ENCODE measurements at regions of chr3 and their contacts with region 1.

Region 1: DNA sequence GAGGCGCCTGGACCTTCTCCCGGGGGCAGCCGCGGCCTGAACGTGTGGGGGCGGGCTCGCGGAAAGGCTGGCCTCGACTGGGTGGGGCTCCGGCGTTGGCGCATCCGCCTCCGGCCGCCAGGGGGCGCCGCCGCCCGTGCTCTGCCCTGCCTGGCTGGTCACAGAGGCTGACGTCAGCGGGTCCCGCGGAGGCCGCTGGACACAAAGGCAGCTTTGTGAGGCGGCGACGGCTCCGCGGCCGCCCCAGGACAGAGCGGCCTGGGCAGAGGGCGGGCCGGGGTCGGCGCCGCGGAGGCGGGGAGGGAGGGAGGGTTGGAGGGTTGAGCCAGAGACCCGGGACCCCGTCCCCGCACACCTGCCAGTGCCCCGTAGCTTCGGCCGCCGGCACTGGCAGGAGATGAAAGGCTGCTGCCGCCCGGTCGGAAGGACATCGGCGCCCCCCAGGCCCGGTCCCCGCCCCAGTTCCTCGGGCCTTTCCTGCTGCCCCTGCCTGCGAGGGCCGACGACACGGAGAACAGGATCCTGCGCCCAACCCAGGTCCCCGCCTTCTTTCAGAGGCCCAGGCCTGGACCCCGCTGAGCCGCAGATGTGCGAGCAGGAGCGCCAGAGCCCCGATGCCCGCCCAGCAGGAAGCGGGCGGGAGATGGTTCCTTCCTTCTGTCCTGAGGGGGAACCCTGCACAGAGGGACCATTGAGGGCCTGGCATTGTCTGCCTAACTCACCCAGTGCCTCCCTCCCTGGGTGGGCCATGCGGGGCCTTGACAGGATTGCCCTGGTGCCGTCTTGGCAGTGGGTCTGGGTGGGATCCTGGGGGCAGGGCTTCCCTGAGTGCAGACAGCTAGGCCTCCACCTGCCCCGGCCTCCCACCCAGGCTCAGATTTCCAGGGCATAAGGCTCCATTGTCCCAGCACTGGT is 8.7 kb upstream of the SEMA3B start:
- DNase-seq: peak; percentile 89
- H3K4me3 ChIP-seq: peak overlapping the region; percentile 54 to 62
- H3K27ac ChIP-seq: peak overlapping the region; percentile 96 to 98
- H3K4me1 ChIP-seq: peaks cover 16% of the 10 kb centered on the region
- H3K27me3 ChIP-seq: no peaks in the 10 kb centered on the region
- CTCF ChIP-seq: peak; percentile 99 to 100 (median 100)
- POLR2A ChIP-seq: peak; percentile 69

Region 2: DNA sequence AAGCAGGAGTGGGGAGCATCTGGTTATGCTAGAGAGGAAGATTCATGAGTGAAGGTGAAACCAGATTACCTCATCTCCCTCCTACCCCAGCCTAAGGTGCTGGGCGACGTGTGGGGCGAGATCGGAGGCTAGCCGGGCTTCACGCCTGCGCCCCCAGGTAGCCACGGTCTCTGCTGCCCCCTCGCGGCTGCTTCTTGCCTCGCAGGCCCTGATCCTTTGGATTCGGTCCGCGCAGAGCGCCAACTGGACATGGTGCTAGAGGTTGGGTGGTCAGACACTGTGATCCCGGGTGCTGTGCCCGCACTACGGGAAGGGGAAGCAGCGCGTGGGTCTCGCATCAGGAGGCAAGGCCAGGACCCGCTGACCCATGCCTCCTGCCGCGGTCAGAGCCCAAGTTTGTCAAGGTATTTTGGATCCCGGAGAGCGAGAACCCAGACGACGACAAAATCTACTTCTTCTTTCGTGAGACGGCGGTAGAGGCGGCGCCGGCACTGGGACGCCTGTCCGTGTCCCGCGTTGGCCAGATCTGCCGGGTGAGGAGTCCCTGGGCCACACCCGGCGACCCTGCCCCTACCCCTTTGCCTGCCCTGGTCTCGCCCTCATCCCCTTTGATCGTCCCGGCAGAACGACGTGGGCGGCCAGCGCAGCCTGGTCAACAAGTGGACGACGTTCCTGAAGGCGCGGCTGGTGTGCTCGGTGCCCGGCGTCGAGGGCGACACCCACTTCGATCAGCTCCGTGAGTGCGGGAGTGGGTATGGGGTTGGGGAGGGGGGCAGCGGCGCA is 12.8 kb after region 1 on chr3:
- intact Hi-C with region 1: loop called (anchors 1 kb)
- DNase-seq: peak; percentile 78
- H3K4me3 ChIP-seq: peak overlapping the region in 1 of 2 donors; percentile 19
- H3K27ac ChIP-seq: no peak overlapping the region
- H3K4me1 ChIP-seq: peaks cover 13% of the 10 kb centered on the region
- H3K27me3 ChIP-seq: no peaks in the 10 kb centered on the region
- CTCF ChIP-seq: peak; percentile 84 to 100 (median 99)
- POLR2A ChIP-seq: no peak